ENCODE measurements at regions of chr18 and their contacts with region 1.

Region 1: GRCh38 chr18:3604498-3605408 is 154.8 kb downstream of the TGIF1 start:
- DNase-seq: peak in 5 of 14 experiments; percentile 9 to 85 (median 72)
- ATAC-seq: peak; percentile 69
- H3K4me3 ChIP-seq: peak overlapping the region; percentile 47
- H3K4me3 Mint-ChIP-seq: no peak overlapping the region
- H3K27ac ChIP-seq: peak overlapping the region; percentile 38 to 58
- H3K27ac Mint-ChIP-seq: no peak overlapping the region
- H3K4me1 ChIP-seq: peaks cover 47% of the 10 kb centered on the region
- H3K4me1 Mint-ChIP-seq: peaks cover 8% of the 10 kb centered on the region
- H3K27me3 ChIP-seq: no peaks in the 10 kb centered on the region
- H3K27me3 Mint-ChIP-seq: no peaks in the 10 kb centered on the region
- CTCF ChIP-seq: no peak

Region 2: DNA sequence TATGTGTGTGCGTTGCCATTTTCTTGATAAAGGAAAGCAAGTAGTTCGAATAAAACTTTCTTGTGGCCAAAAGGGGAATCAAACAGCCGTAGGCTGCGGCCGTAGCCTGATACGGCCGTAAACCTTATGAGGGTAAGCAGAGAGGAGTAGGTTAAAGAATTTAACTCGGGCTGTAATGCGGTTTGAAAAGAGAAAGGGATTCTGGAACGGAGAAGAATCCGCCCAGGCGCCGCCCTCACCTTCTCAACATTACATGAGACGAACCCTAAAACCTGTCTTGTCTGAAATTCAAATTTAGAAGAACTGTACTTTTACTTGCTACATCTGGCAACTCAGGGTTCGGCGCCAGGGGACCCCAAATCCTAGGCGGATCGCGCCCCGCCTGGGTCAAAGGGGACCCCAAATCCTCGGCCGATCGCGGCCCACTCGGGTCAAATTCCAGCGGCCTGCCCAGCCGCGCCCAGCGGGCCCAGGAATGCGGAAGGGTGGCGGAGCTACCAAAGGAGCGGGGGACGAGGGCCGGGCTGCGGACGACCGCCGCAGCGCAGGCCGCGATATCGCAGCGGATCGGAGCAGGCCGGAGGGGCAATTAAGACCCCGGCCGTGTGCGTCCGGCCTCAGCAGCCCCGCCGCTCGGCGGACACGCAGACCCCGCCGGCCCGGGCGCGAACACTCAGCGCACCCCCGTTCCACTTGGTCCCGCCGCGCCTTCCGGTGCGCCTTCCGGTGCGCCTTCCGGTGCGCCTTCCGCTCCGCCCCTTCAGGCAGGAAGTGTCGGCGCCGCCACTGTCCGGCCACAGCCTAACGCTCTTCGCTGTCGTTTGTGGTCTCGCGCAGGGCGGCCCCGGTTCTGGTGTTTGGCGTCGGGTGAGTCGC is 343.1 kb before region 1 on chr18 and contains the start of gene MYL12B:
- CTCF ChIA-PET with region 1: no interaction called
- POLR2A ChIA-PET with region 1: interaction called, 7 read pairs
- intact Hi-C with region 1: loop called in 1 of 2 experiments (anchors 5 kb)
- DNase-seq: peak; percentile 63 to 92 (median 75)
- ATAC-seq: peak; percentile 71
- H3K4me3 ChIP-seq: peak within 1 kb of the TSS; percentile 68
- H3K4me3 Mint-ChIP-seq: peak within 1 kb of the TSS; percentile 100
- H3K27ac ChIP-seq: peak within 1 kb of the TSS; percentile 95 to 98
- H3K27ac Mint-ChIP-seq: peak within 1 kb of the TSS; percentile 100
- H3K4me1 ChIP-seq: peaks cover 43% of the 10 kb centered on the region
- H3K4me1 Mint-ChIP-seq: peaks cover 85% of the 10 kb centered on the region
- H3K27me3 ChIP-seq: no peaks in the 10 kb centered on the region
- H3K27me3 Mint-ChIP-seq: no peaks in the 10 kb centered on the region
- CTCF ChIP-seq: no peak
- total RNA-seq, gene MYL12B: 128 to 133 TPM

Region 3: DNA sequence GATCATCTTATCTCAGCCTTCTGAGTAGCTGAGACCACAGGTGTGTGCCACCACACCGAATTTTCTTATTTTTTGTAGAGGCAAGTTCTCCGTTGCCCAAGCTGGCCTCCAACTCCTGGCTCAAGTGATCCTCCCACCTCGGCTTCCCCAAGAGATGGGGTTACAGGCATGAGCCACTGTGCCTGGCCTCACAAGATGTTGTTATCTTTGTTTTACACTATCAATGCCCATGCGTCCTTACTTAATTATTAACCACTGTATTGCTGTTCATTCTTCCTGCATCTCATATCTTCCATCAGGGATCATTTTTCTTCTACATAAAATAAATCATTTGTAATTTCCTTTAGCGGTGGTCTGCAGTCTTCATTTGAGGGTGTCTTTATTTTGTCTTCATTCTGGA is 27.1 kb after region 1 on chr18:
- CTCF ChIA-PET with region 1: no interaction called
- POLR2A ChIA-PET with region 1: no interaction called
- intact Hi-C with region 1: loop called in 1 of 2 experiments (anchors 5 kb)
- DNase-seq: no peak
- ATAC-seq: no peak
- H3K4me3 ChIP-seq: no peak overlapping the region
- H3K4me3 Mint-ChIP-seq: no peak overlapping the region
- H3K27ac ChIP-seq: no peak overlapping the region
- H3K27ac Mint-ChIP-seq: no peak overlapping the region
- H3K4me1 ChIP-seq: no peaks in the 10 kb centered on the region
- H3K4me1 Mint-ChIP-seq: no peaks in the 10 kb centered on the region
- H3K27me3 ChIP-seq: no peaks in the 10 kb centered on the region
- H3K27me3 Mint-ChIP-seq: no peaks in the 10 kb centered on the region
- CTCF ChIP-seq: no peak